ENCODE measurements at regions of chr7 and their contacts with region 1.

Region 1: DNA sequence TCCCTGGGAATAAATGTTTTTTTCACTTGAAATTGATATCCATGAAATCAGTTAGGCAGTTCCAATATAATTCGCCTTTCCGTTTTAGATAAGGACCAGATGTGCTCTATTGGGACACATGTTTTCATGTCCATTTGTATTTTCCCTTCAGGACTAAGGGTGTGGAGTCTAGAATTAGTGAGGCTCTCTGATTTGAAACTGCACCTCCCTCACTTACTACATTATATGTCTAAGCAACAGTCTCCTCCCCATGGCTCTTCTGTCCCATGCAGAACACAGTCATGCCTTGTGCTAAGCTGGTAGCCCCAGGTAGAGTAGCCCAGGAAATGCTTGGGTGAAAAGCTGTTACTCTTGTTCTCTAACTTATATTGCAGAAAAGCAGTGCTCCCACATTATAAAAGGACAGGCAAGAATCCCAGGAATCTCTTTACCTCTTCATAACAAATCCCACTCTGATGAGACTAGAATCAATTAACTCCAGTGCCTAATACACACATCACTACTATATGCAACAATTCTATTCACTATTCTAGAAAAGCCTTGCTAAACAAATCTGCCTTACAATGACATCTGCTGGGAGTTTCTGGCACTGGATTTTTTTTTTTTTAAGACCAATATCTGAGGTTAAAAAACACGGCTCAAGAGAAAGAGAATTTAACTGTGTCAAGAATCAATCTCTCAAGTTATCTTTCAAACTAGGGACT is 293.9 kb downstream of the SNX13 start:
- DNase-seq: peak; percentile 57
- H3K4me3 ChIP-seq: no peak overlapping the region
- H3K27ac ChIP-seq: no peak overlapping the region
- H3K4me1 ChIP-seq: peaks cover 8% of the 10 kb centered on the region
- H3K27me3 ChIP-seq: no peaks in the 10 kb centered on the region
- CTCF ChIP-seq: peak; percentile 40 to 53

Region 2: GRCh38 chr7:16926283-16926682 is 720.1 kb before region 1 on chr7:
- CTCF ChIA-PET with region 1: no interaction called
- dilution Hi-C with region 1: no loop called
- in situ Hi-C with region 1: no loop called
- intact Hi-C with region 1: loop called (anchors 1 kb)
- DNase-seq: peak; percentile 23
- H3K4me3 ChIP-seq: no peak overlapping the region
- H3K27ac ChIP-seq: no peak overlapping the region
- H3K4me1 ChIP-seq: peaks cover 10% of the 10 kb centered on the region
- H3K27me3 ChIP-seq: no peaks in the 10 kb centered on the region
- CTCF ChIP-seq: peak; percentile 86 to 90

Region 3: DNA sequence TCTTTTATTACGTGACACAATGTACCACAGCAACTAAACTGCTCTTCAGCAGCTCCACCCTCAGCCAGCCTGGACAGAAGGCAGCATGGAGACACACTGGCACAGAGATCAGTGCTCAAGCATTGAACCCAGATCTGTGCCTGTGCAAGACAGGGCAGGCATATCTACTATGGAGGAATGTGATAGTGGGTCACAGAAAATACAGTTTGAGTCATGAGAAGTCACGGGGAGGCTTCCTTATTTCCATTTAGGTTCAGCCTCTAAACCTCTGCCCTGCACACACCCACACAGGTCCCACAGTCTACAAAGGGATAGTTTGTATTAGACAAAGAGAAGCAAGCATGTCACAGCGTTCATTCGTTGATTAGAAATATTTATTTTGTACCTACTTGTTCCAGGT is 577.3 kb before region 1 on chr7:
- CTCF ChIA-PET with region 1: no interaction called
- dilution Hi-C with region 1: no loop called
- in situ Hi-C with region 1: no loop called
- intact Hi-C with region 1: loop called (anchors 5 kb)
- DNase-seq: peak; percentile 81
- H3K4me3 ChIP-seq: no peak overlapping the region
- H3K27ac ChIP-seq: peak overlapping the region; percentile 16
- H3K4me1 ChIP-seq: peaks cover 16% of the 10 kb centered on the region
- H3K27me3 ChIP-seq: no peaks in the 10 kb centered on the region
- CTCF ChIP-seq: peak in 1 of 2 donors; percentile 8

Region 4: DNA sequence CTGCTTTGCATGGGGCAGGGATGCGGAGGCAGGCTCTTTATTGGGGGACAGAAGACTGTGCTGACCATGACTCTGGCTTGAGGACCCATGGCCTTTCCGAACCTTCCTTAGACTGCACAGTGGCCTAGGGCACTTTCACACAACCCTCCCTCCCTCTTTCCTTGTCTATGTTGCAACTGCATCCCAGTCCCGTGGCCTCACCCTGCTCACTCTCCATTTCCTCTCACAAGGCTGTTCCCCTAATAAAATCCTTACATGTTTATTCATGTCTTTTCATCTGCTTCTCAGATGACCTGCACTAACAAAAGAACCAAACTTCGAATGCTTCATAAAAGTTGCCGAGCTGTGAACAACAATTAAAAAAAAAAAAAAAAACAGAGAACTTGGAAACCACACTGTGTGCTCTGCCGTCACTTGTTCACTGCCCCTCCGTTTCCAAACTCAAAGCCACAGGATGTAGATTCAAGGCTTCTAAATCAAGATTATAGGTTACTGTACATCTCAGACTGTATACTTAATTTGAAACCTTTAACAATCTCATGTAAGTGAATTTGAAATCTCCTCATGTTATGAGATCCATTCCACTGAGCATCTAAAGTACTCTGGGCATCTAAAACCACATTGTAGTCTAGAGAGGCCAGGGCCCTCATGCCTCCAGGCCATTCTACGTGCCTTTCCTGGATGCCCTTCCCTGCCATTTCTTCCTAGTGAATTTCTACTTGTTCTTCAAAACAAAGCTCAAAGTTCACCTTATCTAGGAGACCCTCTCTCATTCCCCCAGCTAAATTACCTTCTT is 28.0 kb after region 1 on chr7:
- CTCF ChIA-PET with region 1: no interaction called
- dilution Hi-C with region 1: no loop called
- in situ Hi-C with region 1: no loop called
- intact Hi-C with region 1: no loop called
- DNase-seq: peak; percentile 94
- H3K4me3 ChIP-seq: no peak overlapping the region
- H3K27ac ChIP-seq: peak overlapping the region; percentile 94
- H3K4me1 ChIP-seq: peaks cover 54% of the 10 kb centered on the region
- H3K27me3 ChIP-seq: no peaks in the 10 kb centered on the region
- CTCF ChIP-seq: no peak

Region 5: GRCh38 chr7:17725796-17726195 is 79.4 kb after region 1 on chr7:
- CTCF ChIA-PET with region 1: no interaction called
- dilution Hi-C with region 1: no loop called
- in situ Hi-C with region 1: no loop called
- intact Hi-C with region 1: no loop called
- DNase-seq: no peak
- H3K4me3 ChIP-seq: no peak overlapping the region
- H3K27ac ChIP-seq: no peak overlapping the region
- H3K4me1 ChIP-seq: no peaks in the 10 kb centered on the region
- H3K27me3 ChIP-seq: no peaks in the 10 kb centered on the region
- CTCF ChIP-seq: no peak

Region 6: DNA sequence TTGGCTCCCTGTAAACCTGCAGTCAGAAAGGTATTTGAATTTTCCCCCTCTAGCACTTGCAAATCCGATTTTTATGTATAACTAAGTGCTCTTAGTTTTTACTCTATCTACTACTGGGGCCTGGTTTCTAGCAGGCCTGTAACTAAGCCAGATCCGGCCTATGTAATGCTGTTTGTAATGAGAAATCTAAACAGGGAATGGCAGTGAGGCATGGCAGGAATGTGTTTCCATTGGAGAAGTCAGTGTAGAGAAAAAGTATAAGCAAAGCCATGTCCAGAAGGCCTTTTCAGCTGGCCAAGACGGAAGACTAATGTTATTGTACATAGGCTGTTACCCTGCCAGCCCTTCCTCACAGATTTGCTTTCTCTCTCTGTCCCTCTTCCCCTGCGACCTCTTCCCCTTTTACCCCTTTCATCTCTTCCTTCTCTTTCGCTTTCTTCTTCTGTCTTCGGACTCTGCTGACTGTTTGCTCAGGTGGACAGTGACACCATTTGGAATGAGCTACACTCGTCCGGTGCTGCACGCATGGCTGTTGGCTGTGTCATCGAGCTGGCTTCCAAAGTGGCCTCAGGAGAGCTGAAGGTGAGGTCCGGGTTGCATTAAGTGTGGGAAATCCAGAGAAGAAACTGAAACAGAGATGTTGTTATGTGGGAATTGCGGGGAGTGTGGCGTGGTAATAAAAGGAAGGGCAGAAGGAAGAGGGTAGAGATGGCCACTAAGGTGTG is 1146.6 kb after region 1 on chr7:
- CTCF ChIA-PET with region 1: no interaction called
- dilution Hi-C with region 1: no loop called
- in situ Hi-C with region 1: no loop called
- intact Hi-C with region 1: no loop called
- DNase-seq: no peak
- H3K4me3 ChIP-seq: no peak overlapping the region
- H3K27ac ChIP-seq: no peak overlapping the region
- H3K4me1 ChIP-seq: no peaks in the 10 kb centered on the region
- H3K27me3 ChIP-seq: no peaks in the 10 kb centered on the region
- CTCF ChIP-seq: no peak

Measured in mammary epithelial cell (primary cell).